CD8-positive, alpha-beta T cell (primary cell): ENCODE measurements at regions of chr15 and their contacts with region 1.

Region 1: GRCh38 chr15:40367686-40368611 is 9.9 kb downstream of the DISP2 start:
- DNase-seq: peak; percentile 74 to 96 (median 85)
- ATAC-seq: peak; percentile 95
- H3K4me3 ChIP-seq: peak overlapping the region; percentile 58 to 75
- H3K4me3 Mint-ChIP-seq: peak overlapping the region; percentile 83
- H3K27ac ChIP-seq: peak overlapping the region; percentile 17 to 62
- H3K27ac Mint-ChIP-seq: peak overlapping the region; percentile 84
- H3K4me1 ChIP-seq: peaks cover 23% of the 10 kb centered on the region
- H3K4me1 Mint-ChIP-seq: peaks cover 19% of the 10 kb centered on the region
- H3K27me3 ChIP-seq: no peaks in the 10 kb centered on the region
- H3K27me3 Mint-ChIP-seq: no peaks in the 10 kb centered on the region
- CTCF ChIP-seq: peak; percentile 92

Region 2: DNA sequence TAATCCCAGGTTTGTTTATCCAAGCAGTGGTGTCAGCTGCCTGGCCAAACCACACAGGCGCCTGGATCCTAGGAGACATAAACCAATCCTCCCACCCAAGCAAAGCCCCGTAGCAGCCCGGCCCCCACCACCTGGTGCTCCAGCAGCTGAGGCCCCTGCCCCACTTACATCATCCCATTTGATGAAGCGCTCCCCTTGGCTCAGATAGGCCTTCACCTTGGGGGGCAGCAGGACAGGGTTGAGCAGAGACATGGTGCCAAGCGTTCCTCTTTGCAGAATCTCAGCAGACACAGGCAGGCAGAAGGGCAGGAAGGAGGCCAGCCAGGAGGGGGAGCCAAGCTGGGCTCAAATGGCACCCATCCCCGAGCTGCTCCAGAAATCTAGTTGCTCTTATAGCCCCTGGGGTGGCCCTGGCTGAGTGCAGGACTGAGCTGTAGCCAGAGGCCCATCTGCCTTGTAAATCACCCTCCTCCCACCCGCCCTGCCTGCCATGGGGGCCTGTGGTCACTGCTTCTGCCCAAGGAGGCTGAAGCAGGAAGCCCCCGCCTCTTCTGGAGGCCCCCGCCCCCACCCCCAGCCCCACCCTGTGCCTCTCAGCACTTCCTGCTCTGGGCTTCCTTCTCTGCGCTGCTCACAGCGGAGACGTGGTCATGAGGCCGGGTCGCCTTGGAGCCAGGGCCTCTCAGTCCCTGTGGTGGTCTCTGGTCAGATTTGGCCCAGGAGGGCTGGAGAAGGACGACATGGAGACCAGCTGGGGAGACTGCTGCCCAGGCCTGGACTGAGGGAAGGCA is 60.3 kb before region 1 on chr15 and contains the start of gene PLCB2:
- CTCF ChIA-PET with region 1: interaction called, 6 read pairs
- POLR2A ChIA-PET with region 1: interaction called, 3 read pairs
- intact Hi-C with region 1: loop called in 1 of 2 experiments (anchors 1 kb)
- DNase-seq: peak; percentile 45 to 86 (median 72)
- ATAC-seq: peak; percentile 76
- H3K4me3 ChIP-seq: peak within 1 kb of the TSS; percentile 92 to 97
- H3K4me3 Mint-ChIP-seq: peak within 1 kb of the TSS; percentile 95
- H3K27ac ChIP-seq: peak within 1 kb of the TSS; percentile 76 to 87
- H3K27ac Mint-ChIP-seq: peak within 1 kb of the TSS; percentile 96
- H3K4me1 ChIP-seq: peaks cover 31% of the 10 kb centered on the region
- H3K4me1 Mint-ChIP-seq: peaks cover 46% of the 10 kb centered on the region
- H3K27me3 ChIP-seq: no peaks in the 10 kb centered on the region
- H3K27me3 Mint-ChIP-seq: no peaks in the 10 kb centered on the region
- CTCF ChIP-seq: peak; percentile 57
- total RNA-seq, gene PLCB2: 154 to 167 TPM

Region 3: DNA sequence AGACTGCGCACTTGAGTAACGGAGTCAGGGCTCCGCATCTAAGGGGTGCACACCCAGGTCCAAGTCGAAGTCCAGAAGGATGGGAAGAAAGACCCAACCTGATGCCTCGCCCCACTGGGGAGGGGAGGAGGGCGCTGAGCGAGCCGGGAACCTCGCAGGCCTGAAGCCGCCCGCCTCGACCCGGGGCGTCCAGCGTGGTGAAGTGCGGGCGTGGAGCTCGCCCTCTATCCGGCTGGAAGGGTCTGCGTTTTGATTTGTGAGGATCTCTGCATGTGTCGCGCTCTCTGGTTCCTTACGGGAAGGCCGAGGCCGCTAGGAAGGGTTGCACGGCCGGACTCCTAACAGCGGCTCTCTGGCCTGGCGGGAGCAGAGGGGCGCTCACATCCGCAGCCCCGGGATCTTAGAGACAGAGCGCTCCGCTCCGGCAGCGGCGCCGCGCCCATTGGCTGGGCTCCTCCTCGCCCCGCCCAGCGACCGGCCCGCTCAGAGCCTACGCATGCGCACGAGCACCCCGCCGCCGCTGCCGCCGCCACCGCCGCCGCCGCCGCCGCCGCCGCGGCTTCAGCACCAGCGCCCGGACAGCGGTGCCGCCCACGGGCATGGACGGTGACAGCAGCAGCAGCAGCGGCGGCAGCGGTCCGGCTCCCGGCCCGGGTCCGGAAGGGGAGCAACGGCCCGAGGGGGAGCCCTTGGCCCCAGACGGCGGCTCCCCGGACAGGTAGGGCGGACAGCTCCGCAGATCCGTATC is 10.1 kb before region 1 on chr15 and contains the start of gene DISP2:
- CTCF ChIA-PET with region 1: interaction called, 10 read pairs
- POLR2A ChIA-PET with region 1: interaction called, 14 read pairs
- intact Hi-C with region 1: loop called in 1 of 2 experiments (anchors 1 kb)
- DNase-seq: peak; percentile 82 to 93 (median 88)
- ATAC-seq: peak; percentile 94
- H3K4me3 ChIP-seq: peak within 1 kb of the TSS; percentile 63 to 65
- H3K4me3 Mint-ChIP-seq: peak within 1 kb of the TSS; percentile 83
- H3K27ac ChIP-seq: no peak within 1 kb of the TSS
- H3K27ac Mint-ChIP-seq: no peak within 1 kb of the TSS
- H3K4me1 ChIP-seq: peaks cover 13% of the 10 kb centered on the region
- H3K4me1 Mint-ChIP-seq: peaks cover 9% of the 10 kb centered on the region
- H3K27me3 ChIP-seq: no peaks in the 10 kb centered on the region
- H3K27me3 Mint-ChIP-seq: peaks cover 2% of the 10 kb centered on the region
- CTCF ChIP-seq: no peak
- total RNA-seq, gene DISP2: 0.05 to 0.25 TPM

Region 4: GRCh38 chr15:40382580-40383456 is 14.9 kb after region 1 on chr15 and contains the start of gene KNSTRN:
- CTCF ChIA-PET with region 1: interaction called, 41 read pairs
- POLR2A ChIA-PET with region 1: interaction called, 5 read pairs
- intact Hi-C with region 1: loop called (anchors 1 kb)
- DNase-seq: peak; percentile 84 to 95 (median 93)
- ATAC-seq: peak; percentile 99
- H3K4me3 ChIP-seq: peak within 1 kb of the TSS; percentile 73 to 93
- H3K4me3 Mint-ChIP-seq: peak within 1 kb of the TSS; percentile 99
- H3K27ac ChIP-seq: peak within 1 kb of the TSS in 1 of 2 experiments; percentile 54
- H3K27ac Mint-ChIP-seq: peak within 1 kb of the TSS; percentile 81
- H3K4me1 ChIP-seq: peaks cover 13% of the 10 kb centered on the region
- H3K4me1 Mint-ChIP-seq: peaks cover 16% of the 10 kb centered on the region
- H3K27me3 ChIP-seq: no peaks in the 10 kb centered on the region
- H3K27me3 Mint-ChIP-seq: no peaks in the 10 kb centered on the region
- CTCF ChIP-seq: no peak
- total RNA-seq, gene KNSTRN: 3.8 to 5.4 TPM

Region 5: GRCh38 chr15:40398413-40398873 is 30.5 kb after region 1 on chr15:
- CTCF ChIA-PET with region 1: interaction called, 11 read pairs
- POLR2A ChIA-PET with region 1: interaction called, 10 read pairs
- intact Hi-C with region 1: no loop called
- DNase-seq: peak in 1 of 9 experiments; percentile 40
- ATAC-seq: peak; percentile 46
- H3K4me3 ChIP-seq: no peak overlapping the region
- H3K4me3 Mint-ChIP-seq: peak overlapping the region; percentile 29
- H3K27ac ChIP-seq: no peak overlapping the region
- H3K27ac Mint-ChIP-seq: peak overlapping the region; percentile 46
- H3K4me1 ChIP-seq: peaks cover 16% of the 10 kb centered on the region
- H3K4me1 Mint-ChIP-seq: peaks cover 22% of the 10 kb centered on the region
- H3K27me3 ChIP-seq: no peaks in the 10 kb centered on the region
- H3K27me3 Mint-ChIP-seq: no peaks in the 10 kb centered on the region
- CTCF ChIP-seq: no peak

Region 6: DNA sequence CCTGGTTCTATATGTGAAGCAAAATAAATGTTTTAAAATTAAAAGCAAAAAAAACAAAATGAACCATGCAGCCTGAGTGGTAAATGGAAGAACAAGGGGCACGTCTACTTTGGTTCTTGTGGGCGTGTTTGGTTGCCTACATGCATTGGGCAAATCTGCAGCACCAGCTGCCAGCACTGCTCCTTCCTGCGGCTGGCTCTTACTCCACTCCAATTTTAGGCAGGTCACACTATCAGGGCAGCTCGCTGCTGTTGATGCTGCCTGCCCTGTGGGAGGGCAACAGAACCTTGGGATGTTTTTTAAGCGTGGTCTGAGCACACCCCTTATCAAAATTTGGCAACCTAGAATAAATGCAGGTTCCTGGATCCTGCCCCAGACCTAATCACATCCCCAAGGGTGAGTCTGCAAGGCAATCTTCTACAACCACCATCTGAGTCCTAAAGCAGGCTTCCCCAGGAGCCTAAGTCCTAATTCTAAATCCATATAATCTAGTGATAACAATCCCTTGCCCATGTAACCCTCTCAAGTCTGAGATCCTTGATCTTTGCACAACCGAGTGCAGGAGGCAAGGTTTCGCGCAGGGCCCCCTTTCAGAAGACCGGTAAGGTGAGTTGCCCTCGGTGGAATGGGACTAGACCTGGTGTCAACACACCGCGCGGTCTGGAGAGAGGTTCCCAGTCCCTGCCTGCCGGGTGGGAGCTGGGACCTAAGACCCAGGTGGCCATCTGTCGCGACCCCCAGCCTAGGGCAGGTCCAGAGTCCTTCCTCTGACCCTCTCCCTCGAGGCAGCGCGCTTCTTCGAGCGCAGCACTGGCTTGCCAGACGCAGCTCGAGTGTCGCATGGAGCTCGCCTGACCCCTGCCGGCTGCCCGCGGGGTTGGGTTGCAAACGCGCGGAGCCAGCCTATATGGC is 53.6 kb after region 1 on chr15:
- CTCF ChIA-PET with region 1: interaction called, 39 read pairs
- POLR2A ChIA-PET with region 1: interaction called, 3 read pairs
- intact Hi-C with region 1: loop called (anchors 1 kb)
- DNase-seq: peak; percentile 65 to 89 (median 80)
- ATAC-seq: peak; percentile 99
- H3K4me3 ChIP-seq: no peak overlapping the region
- H3K4me3 Mint-ChIP-seq: no peak overlapping the region
- H3K27ac ChIP-seq: no peak overlapping the region
- H3K27ac Mint-ChIP-seq: no peak overlapping the region
- H3K4me1 ChIP-seq: peaks cover 6% of the 10 kb centered on the region
- H3K4me1 Mint-ChIP-seq: no peaks in the 10 kb centered on the region
- H3K27me3 ChIP-seq: no peaks in the 10 kb centered on the region
- H3K27me3 Mint-ChIP-seq: no peaks in the 10 kb centered on the region
- CTCF ChIP-seq: peak; percentile 80

Region 7: GRCh38 chr15:40454904-40455391 is 87.0 kb after region 1 on chr15:
- CTCF ChIA-PET with region 1: no interaction called
- POLR2A ChIA-PET with region 1: no interaction called
- intact Hi-C with region 1: no loop called
- DNase-seq: peak in 4 of 9 experiments; percentile 24 to 55 (median 37)
- ATAC-seq: peak; percentile 38
- H3K4me3 ChIP-seq: no peak overlapping the region
- H3K4me3 Mint-ChIP-seq: peak overlapping the region; percentile 81
- H3K27ac ChIP-seq: peak overlapping the region; percentile 11 to 56
- H3K27ac Mint-ChIP-seq: peak overlapping the region; percentile 90
- H3K4me1 ChIP-seq: peaks cover 76% of the 10 kb centered on the region
- H3K4me1 Mint-ChIP-seq: peaks cover 71% of the 10 kb centered on the region
- H3K27me3 ChIP-seq: no peaks in the 10 kb centered on the region
- H3K27me3 Mint-ChIP-seq: no peaks in the 10 kb centered on the region
- CTCF ChIP-seq: no peak